ENCODE measurements at regions of chr14 and their contacts with region 1.

Region 1: GRCh38 chr14:49408187-49408933 is 177.8 kb downstream of the RPS29 start:
- DNase-seq: no peak
- ATAC-seq: peak; percentile 50
- H3K4me3 ChIP-seq: no peak overlapping the region
- H3K27ac ChIP-seq: no peak overlapping the region
- H3K4me1 ChIP-seq: no peaks in the 10 kb centered on the region
- H3K27me3 ChIP-seq: no peaks in the 10 kb centered on the region
- CTCF ChIP-seq: no peak
- POLR2A ChIP-seq: no peak
- RAD21 ChIP-seq: no peak

Region 2: GRCh38 chr14:49106741-49107667 is 301.4 kb before region 1 on chr14:
- CTCF ChIA-PET with region 1: no interaction called
- POLR2A ChIA-PET with region 1: no interaction called
- dilution Hi-C with region 1: no loop called
- in situ Hi-C with region 1: no loop called
- intact Hi-C with region 1: no loop called
- DNase-seq: peak; percentile 47
- ATAC-seq: peak; percentile 70
- H3K4me3 ChIP-seq: no peak overlapping the region
- H3K27ac ChIP-seq: no peak overlapping the region
- H3K4me1 ChIP-seq: no peaks in the 10 kb centered on the region
- H3K27me3 ChIP-seq: no peaks in the 10 kb centered on the region
- CTCF ChIP-seq: no peak
- POLR2A ChIP-seq: no peak
- RAD21 ChIP-seq: no peak

Region 3: DNA sequence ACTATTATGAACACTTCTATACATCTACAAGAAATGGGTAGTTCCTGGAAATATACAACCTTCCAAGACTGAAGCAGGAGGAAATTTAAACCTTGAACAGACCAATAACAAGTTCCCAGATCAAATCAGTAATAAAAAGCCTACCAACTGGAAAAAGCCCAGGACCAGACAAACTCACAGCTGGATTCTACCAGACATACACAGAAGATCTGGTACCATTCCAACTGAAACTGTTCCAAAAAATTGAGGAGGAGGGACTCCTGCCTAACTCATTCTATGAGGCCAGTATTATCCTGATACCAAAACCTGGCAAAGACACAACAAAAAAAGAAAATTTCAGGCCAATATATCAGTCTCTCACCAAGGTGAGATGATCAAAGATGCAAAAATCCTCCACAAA is 11.6 kb before region 1 on chr14:
- CTCF ChIA-PET with region 1: no interaction called
- POLR2A ChIA-PET with region 1: interaction called, 16 read pairs
- dilution Hi-C with region 1: no loop called
- in situ Hi-C with region 1: no loop called
- intact Hi-C with region 1: no loop called
- DNase-seq: no peak
- ATAC-seq: no peak
- H3K4me3 ChIP-seq: no peak overlapping the region
- H3K27ac ChIP-seq: no peak overlapping the region
- H3K4me1 ChIP-seq: no peaks in the 10 kb centered on the region
- H3K27me3 ChIP-seq: no peaks in the 10 kb centered on the region
- CTCF ChIP-seq: no peak
- POLR2A ChIP-seq: no peak
- RAD21 ChIP-seq: no peak